ENCODE measurements at regions of chr22 and their contacts with region 1.

Region 1: DNA sequence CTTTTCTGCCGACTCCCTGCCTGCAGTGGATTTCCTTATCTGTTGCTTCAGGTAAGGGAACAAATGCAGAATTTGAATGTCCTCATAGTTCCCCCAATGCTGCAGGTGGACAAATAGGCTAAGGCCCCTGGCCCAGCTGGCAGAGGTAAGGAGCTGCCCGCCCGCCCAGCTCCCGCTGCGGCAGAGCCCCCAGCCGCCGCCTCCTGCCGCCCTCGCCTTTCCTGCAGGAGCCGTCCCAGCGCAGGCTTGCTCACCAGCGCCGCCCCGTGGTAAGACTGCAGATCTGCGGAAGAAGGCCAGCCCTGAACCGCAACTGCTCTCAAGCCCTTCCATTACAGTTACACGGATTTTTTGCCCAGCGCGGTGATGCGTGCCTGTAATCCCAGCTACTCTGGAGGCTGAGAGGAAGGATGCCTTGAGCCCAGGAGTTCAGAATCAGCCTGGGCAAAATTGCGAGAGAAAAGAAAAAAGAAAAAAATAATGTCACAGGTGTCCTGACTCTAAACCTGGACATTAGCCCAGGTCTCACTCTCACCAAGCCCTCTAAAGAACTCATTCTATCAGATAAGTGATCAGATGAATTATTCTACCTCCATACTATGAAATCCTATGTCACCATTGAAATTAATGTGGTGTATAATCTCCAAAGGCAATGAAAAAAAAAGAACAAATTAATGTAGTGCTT is 51.2 kb upstream of the EMID1 start:
- DNase-seq: peak; percentile 46 to 59
- ATAC-seq: peak; percentile 81 to 89
- H3K4me3 ChIP-seq: peak overlapping the region; percentile 14 to 26 (median 18)
- H3K27ac ChIP-seq: no peak overlapping the region
- H3K4me1 ChIP-seq: peaks cover 18 to 22% of the 10 kb centered on the region in 2 donors
- H3K27me3 ChIP-seq: no peaks in the 10 kb centered on the region
- CTCF ChIP-seq: peak; percentile 85 to 98 (median 92)
- POLR2A ChIP-seq: no peak

Region 2: GRCh38 chr22:28855355-28856094 is 299.0 kb before region 1 on chr22:
- in situ Hi-C with region 1: loop called in 3 of 4 experiments (anchors 10 to 25 kb)
- intact Hi-C with region 1: loop called (anchors 5 kb)
- DNase-seq: peak in 1 of 2 donors; percentile 24
- ATAC-seq: peak; percentile 68 to 73
- H3K4me3 ChIP-seq: no peak overlapping the region
- H3K27ac ChIP-seq: no peak overlapping the region
- H3K4me1 ChIP-seq: peaks cover 13% of the 10 kb centered on the region in 2 donors
- H3K27me3 ChIP-seq: no peaks in the 10 kb centered on the region
- CTCF ChIP-seq: peak; percentile 91 to 92 (median 92)
- POLR2A ChIP-seq: no peak

Region 3: DNA sequence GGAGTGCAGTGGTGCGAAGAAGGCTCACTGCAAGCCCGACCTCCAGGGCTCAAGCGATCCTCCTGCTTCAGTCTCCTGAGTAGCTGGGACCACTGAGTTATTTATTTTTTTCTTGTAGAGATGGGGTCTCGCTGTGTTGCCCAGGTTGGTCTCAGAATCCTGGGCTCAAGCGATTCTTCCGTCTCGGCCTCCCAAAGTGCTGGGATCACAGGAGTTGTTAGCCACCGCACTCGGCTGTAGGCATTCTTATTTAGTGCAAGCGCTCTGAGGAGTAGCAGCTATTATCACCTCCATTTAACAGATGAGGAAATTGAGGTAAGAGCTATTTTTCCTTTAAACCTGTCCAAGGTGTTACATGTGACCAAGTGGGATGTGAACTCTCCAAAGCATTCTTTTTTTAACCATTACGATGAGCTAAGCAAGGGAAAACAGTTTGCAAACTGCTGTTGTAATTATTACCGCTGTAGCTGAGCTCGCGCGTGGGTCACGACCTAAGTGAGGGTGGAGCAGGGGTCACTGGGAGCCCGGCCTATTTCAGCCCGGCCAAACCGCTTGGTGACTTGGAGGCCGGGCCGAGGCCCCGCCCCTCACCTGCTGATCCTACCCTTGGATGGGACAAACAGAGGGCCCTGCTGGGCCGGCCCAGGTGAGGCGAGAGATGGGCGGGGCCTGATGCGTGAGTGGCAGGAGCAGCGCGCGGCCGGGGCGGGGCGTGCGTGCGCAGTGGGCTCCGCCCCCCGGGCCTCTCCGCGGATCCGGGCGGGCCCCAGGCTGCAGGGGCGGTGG is 82.1 kb before region 1 on chr22:
- in situ Hi-C with region 1: no loop called
- intact Hi-C with region 1: loop called (anchors 5 kb)
- DNase-seq: peak; percentile 74 to 87
- ATAC-seq: peak; percentile 83 to 88
- H3K4me3 ChIP-seq: peak overlapping the region; percentile 48 to 73 (median 68)
- H3K27ac ChIP-seq: peak overlapping the region; percentile 16 to 60 (median 38)
- H3K4me1 ChIP-seq: peaks cover 21 to 37% of the 10 kb centered on the region in 2 donors
- H3K27me3 ChIP-seq: no peaks in the 10 kb centered on the region
- CTCF ChIP-seq: no peak
- POLR2A ChIP-seq: no peak

Region 4: DNA sequence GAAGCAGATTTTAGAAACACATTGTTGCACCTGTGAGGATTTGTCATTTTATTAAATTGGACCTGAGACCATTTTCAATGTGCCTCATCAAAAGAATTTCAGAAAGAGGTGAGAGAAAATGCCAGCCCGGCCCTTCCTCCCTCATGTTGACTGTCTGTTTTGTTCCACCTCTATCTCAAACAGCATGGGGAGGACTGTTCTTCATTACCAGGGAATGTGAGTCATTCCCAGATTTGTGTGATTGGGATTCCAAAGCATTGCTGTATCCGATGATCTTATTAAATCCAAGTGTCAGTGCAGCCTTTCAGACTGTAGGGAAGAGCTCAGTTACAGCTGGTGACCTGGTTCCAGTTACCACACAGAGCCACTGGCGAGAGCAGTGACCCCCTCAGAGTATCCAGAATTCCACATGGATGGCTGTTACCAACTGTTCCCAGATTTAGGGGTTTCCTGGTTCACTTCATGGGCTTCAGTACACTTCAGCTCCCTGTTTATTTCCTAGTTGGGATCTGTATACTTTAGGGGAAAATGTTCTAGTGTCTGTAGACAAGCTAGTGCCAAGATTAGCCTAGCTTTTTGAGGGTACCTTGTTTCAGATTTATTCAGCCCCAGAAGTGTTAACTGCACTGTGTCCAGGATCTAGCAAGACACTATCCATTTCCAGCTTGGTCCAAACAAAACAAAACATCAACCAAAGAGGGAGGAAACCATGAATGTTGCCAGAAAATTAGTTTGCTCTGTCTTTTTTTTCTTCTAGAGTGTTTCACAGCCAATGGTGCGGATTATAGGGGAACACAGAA is 60.8 kb before region 1 on chr22:
- in situ Hi-C with region 1: loop called in 1 of 4 experiments (anchors 10 kb)
- intact Hi-C with region 1: no loop called
- DNase-seq: peak in 1 of 2 donors; percentile 29
- ATAC-seq: peak; percentile 59 to 78
- H3K4me3 ChIP-seq: no peak overlapping the region
- H3K27ac ChIP-seq: peak overlapping the region; percentile 45 to 74 (median 64)
- H3K4me1 ChIP-seq: peaks cover 26 to 47% of the 10 kb centered on the region in 2 donors
- H3K27me3 ChIP-seq: no peaks in the 10 kb centered on the region
- CTCF ChIP-seq: no peak
- POLR2A ChIP-seq: no peak

Region 5: DNA sequence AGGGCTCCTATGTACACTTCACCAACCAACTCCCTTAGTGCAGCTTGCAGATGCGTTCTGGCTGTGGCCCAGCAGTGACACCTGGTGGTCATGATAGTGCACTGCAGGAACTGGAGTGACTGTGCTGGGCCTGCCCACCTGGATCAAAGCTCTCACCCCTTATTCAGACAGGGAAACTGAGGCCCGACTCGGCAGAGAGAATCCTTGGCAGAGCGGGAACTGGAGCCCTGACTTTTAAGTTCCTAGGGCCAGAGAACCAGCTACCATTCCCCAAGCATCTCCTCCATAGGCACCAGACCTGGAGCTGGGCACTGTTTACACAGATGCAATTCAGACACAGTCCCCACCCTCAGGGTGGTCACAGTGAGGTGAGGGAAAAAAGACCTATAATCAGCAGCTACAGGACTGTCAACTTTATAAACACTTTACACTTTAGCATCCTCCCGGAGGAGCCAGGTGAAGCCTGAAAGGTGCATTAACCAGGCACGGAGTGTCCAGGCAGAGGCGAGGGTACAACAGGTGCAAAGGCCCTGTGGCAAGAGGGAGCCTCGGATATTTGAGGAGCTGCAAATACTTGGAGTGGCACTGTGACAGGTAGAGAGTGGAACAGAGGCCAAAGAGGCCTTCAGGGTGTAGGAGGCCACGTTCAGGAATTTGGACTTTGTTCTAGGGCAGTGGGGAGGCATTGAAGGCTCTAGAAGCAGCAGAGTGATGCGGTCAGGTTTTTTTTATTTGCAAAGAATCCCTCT is 91.3 kb after region 1 on chr22:
- in situ Hi-C with region 1: no loop called
- intact Hi-C with region 1: loop called (anchors 1 kb)
- DNase-seq: peak; percentile 53 to 63
- ATAC-seq: peak; percentile 76 to 91
- H3K4me3 ChIP-seq: no peak overlapping the region
- H3K27ac ChIP-seq: no peak overlapping the region
- H3K4me1 ChIP-seq: no peaks in the 10 kb centered on the region
- H3K27me3 ChIP-seq: no peaks in the 10 kb centered on the region
- CTCF ChIP-seq: peak; percentile 84 to 97 (median 92)
- POLR2A ChIP-seq: no peak

Region 6: DNA sequence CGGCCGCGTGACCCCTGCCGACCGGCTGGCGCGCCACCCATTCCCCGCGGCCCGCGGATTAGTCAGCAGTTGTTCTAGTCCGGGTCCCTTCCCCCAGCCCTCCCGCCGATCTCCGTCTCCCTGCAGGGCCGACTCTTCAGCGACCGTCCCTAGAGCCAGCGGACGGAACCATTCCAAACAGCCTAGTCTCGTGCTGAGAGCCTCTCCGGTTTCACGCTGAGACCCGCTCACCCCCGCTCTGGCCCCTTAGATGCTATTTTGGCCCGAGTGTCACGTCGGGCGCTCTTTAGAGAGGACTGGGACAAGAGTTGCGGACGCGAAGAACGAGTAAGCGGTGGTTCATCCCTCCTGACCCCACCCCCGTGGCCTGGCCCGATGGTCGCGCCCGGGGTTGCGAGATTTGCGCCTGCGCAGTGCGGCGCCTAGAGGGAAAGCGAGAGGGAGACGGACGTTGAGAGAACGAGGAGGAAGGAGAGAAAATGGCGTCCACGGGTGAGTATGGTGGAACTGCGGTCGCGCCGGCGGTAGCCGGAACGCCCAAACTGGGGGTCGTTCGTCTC is 113.4 kb after region 1 on chr22 and contains the starts of genes EWSR1 and RHBDD3:
- in situ Hi-C with region 1: no loop called
- intact Hi-C with region 1: no loop called
- DNase-seq: peak; percentile 95 to 97
- ATAC-seq: peak; percentile 92 to 93
- H3K4me3 ChIP-seq: peak within 1 kb of the TSS; percentile 83 to 97 (median 94)
- H3K27ac ChIP-seq: peak within 1 kb of the TSS; percentile 97 to 100 (median 98)
- H3K4me1 ChIP-seq: peaks cover 48 to 57% of the 10 kb centered on the region in 2 donors
- H3K27me3 ChIP-seq: no peaks in the 10 kb centered on the region
- CTCF ChIP-seq: peak in 2 of 5 experiments; percentile 28 to 29
- POLR2A ChIP-seq: peak; percentile 85 to 89
- total RNA-seq, gene EWSR1: 192 to 269 (median 202) TPM
- total RNA-seq, gene RHBDD3: 19.8 to 38.0 (median 28.6) TPM

Region 7: GRCh38 chr22:29427176-29427760 is 272.8 kb after region 1 on chr22:
- in situ Hi-C with region 1: no loop called
- intact Hi-C with region 1: no loop called
- DNase-seq: no peak
- ATAC-seq: no peak
- H3K4me3 ChIP-seq: no peak overlapping the region
- H3K27ac ChIP-seq: no peak overlapping the region
- H3K4me1 ChIP-seq: no peaks in the 10 kb centered on the region
- H3K27me3 ChIP-seq: no peaks in the 10 kb centered on the region
- CTCF ChIP-seq: no peak
- POLR2A ChIP-seq: no peak